ENCODE measurements at regions of chr19 and their contacts with region 1.

Region 1: DNA sequence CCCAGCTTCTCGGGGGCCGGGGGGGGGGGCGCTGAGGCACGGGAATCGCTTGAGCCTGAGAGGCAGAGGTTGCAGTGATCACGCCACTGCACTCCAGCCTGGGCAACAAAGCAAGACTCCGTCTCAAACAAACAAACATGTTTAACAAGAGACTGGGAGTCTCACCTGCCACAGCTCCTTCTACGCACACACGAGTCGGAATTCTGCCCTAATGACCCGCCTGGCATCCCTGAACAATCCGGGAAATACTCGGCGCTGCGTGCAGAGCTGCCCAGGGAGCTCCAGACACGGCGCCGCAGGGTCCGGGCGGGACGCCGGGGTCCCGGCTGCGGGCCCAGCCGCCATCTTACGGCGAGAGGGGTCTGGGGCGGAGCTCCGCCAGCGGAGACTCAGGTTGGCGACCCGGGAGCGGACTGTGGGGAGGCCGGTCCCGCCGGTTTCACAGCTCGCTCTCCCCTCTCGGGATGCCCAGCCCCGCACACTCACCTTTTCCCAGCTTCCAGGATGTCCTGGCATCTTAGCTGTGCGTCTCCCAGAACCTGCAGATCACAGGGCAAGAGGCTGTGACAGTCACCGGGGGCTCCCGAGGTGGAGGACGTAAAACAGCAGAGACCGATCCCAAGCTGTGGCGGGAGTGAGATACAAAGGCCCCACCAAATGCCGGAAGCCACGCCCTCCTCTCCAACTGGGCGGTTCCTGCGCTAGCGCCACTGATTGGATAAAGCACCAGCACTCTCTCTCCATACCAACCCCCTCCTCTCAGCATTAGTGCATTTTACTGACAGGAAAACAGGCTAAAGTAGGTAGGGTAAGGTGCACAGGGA is 23.6 kb upstream of the ZNF724 start:
- DNase-seq: peak; percentile 96
- H3K4me3 ChIP-seq: peak overlapping the region; percentile 76 to 96 (median 90)
- H3K27ac ChIP-seq: peak overlapping the region; percentile 83 to 90 (median 90)
- H3K4me1 ChIP-seq: peaks cover 0 to 13% (median 10%) of the 10 kb centered on the region in 4 donors
- H3K27me3 ChIP-seq: no peaks in the 10 kb centered on the region
- CTCF ChIP-seq: no peak
- EP300 ChIP-seq: no peak
- POLR2A ChIP-seq: peak; percentile 65 to 68

Region 2: GRCh38 chr19:23395041-23395721 is 121.4 kb after region 1 on chr19 and contains the start of gene ZNF91:
- intact Hi-C with region 1: loop called (anchors 1 kb)
- DNase-seq: peak; percentile 98
- H3K4me3 ChIP-seq: peak within 1 kb of the TSS; percentile 76 to 90 (median 83)
- H3K27ac ChIP-seq: peak within 1 kb of the TSS; percentile 92 to 97 (median 96)
- H3K4me1 ChIP-seq: peaks cover 0 to 42% (median 23%) of the 10 kb centered on the region in 4 donors
- H3K27me3 ChIP-seq: no peaks in the 10 kb centered on the region
- CTCF ChIP-seq: no peak
- EP300 ChIP-seq: no peak
- POLR2A ChIP-seq: peak; percentile 82 to 87
- total RNA-seq, gene ZNF91: 39.8 to 88.1 (median 58.2) TPM

Measured in sigmoid colon (tissue), 7 donors.